GM13977 (cell line): ENCODE measurements at regions of chr11 and their contacts with region 1.

Region 1: GRCh38 chr11:1796413-1797011 is 32.8 kb upstream of the CTSD start:
- DNase-seq: no peak
- CTCF ChIP-seq: no peak

Region 2: GRCh38 chr11:1532014-1532586 is 264.4 kb before region 1 on chr11:
- in situ Hi-C with region 1: no loop called
- DNase-seq: no peak
- CTCF ChIP-seq: no peak

Region 3: DNA sequence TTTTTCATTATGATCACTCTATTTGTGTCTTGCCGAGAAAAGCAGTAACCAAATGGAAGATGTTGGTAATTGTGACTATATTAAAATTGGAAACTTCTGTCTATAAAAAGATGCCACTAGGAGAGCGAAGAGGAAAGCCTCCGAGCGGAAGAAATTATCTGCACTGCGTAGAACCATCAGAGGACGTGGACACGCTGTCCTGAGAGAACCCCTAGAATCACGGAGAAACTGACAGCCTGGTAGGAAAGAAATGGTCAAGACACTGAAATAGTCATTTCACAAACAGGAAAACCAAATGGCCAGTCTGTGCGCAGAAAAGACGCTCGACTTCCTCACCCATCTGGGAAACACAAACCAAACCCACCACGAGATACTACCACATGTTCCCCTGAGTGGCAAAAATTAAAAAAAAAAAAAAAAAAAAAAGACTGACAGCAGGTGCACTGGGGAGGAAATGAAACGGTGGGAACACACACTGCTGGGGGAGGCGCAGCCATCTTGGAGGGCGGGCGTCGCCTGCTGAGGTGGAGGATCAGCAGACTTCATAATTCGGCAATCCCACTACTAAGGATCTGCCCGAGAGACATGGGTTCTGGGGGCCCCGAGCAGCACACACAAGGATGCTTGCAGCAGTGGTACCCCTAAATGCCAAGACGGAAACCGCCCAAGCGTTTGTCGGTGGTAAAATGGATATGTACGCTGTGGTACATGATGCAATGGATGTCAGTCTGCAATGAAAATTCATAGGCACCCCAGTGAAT is 67.4 kb before region 1 on chr11:
- in situ Hi-C with region 1: loop called (anchors 10 kb)
- DNase-seq: no peak
- CTCF ChIP-seq: no peak

Region 4: GRCh38 chr11:1908618-1909017 is 112.1 kb after region 1 on chr11:
- in situ Hi-C with region 1: no loop called
- DNase-seq: no peak
- CTCF ChIP-seq: no peak

Region 5: GRCh38 chr11:1921574-1922141 is 125.1 kb after region 1 on chr11:
- in situ Hi-C with region 1: no loop called
- DNase-seq: peak; percentile 29
- CTCF ChIP-seq: no peak